A673 (cell line): ENCODE measurements at regions of chr11 and their contacts with region 1.

Region 1: GRCh38 chr11:59550368-59550841 is 39.1 kb downstream of the OR4D9 start:
- DNase-seq: peak; percentile 99
- H3K4me3 ChIP-seq: peak overlapping the region; percentile 60
- H3K27ac ChIP-seq: peak overlapping the region; percentile 91
- H3K4me1 ChIP-seq: peaks cover 15% of the 10 kb centered on the region
- H3K27me3 ChIP-seq: no peaks in the 10 kb centered on the region
- CTCF ChIP-seq: peak; percentile 59

Region 2: DNA sequence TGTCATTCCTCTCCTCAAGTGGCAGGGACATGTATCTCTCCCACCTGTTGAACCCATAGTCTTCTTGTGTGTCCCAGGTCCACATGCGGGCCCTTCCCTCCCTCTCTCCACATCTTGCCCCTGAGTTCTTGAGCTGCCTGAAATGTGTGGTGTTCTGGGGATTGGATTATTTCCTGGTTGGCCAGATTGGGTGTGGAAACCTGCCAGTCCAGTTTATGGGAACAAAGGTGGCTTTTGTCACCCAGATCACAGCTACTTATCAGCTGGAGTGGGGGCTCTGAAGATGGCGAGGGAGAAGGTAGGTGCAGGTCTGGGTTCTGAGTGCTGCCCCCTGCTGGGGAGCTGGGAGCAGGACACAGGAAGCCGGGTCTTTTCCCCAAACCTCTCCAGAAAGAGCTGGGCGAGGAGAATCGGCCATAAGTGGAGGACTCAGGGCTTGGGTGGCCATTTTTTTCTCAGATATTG is 364.2 kb before region 1 on chr11:
- CTCF ChIA-PET with region 1: interaction called, 19 read pairs
- POLR2A ChIA-PET with region 1: no interaction called
- intact Hi-C with region 1: loop called (anchors 10 kb)
- DNase-seq: peak; percentile 66
- H3K4me3 ChIP-seq: no peak overlapping the region
- H3K27ac ChIP-seq: no peak overlapping the region
- H3K4me1 ChIP-seq: no peaks in the 10 kb centered on the region
- H3K27me3 ChIP-seq: no peaks in the 10 kb centered on the region
- CTCF ChIP-seq: peak; percentile 91

Region 3: DNA sequence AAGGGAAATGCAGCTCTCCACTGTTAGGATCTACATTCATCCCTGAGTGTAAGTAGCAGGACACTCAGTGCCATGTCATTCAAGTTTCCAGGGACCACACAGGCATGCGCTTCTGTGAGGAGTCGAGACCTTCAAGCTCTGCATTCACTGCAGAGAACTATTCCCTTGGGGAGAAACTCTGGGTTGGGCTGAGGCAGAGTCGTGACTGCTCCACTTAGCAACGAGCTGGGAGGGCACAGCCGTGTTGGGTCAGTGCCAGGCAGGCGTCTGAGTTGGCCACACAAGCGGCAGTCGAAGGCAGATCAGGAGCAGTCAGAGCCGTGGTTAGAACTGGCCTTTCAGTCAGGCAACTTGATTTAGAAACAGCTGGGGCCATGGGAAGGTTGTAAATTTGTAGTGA is 352.4 kb before region 1 on chr11:
- CTCF ChIA-PET with region 1: no interaction called
- POLR2A ChIA-PET with region 1: no interaction called
- intact Hi-C with region 1: loop called (anchors 10 kb)
- DNase-seq: peak; percentile 89
- H3K4me3 ChIP-seq: no peak overlapping the region
- H3K27ac ChIP-seq: no peak overlapping the region
- H3K4me1 ChIP-seq: peaks cover 38% of the 10 kb centered on the region
- H3K27me3 ChIP-seq: no peaks in the 10 kb centered on the region
- CTCF ChIP-seq: no peak

Region 4: DNA sequence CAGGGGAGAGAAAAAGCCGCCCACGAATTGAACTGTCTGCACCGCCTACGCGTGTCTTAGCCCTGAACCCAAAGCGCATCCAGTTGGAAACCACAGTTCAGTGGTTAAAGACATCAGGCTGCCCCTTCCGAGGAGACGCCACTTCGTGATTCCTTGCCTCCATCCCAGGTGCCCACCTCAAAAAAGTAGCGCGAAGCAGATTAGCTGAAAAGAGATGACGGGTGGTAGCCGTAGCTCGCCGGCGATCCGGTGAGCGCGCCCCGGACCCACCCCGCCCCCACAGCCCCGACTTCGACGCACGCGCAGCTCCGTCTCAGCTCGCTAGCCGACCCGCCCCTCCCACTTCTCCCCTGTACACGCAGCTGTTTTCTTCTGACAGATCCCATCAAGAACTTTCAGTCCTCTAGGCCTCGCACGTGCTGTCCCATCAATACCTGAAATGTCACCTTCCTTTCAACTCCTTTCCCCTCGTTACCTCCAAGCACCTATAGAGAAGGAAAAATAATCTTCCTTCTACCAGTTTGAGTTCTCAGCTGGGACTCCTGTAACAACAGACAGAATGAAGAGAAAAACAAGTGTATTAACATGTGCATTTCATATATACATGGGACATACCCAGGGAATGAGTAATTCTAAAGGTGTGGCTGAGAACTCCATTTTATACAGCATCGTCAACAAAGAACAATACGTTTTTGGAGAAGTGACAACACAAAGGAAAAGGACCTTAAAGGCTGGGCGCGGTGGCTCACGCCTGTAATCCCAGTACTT is 10.5 kb after region 1 on chr11:
- CTCF ChIA-PET with region 1: no interaction called
- POLR2A ChIA-PET with region 1: interaction called, 4 read pairs
- intact Hi-C with region 1: loop called (anchors 1 kb)
- DNase-seq: peak; percentile 93
- H3K4me3 ChIP-seq: peak overlapping the region; percentile 90
- H3K27ac ChIP-seq: peak overlapping the region; percentile 80
- H3K4me1 ChIP-seq: peaks cover 6% of the 10 kb centered on the region
- H3K27me3 ChIP-seq: no peaks in the 10 kb centered on the region
- CTCF ChIP-seq: no peak

Region 5: DNA sequence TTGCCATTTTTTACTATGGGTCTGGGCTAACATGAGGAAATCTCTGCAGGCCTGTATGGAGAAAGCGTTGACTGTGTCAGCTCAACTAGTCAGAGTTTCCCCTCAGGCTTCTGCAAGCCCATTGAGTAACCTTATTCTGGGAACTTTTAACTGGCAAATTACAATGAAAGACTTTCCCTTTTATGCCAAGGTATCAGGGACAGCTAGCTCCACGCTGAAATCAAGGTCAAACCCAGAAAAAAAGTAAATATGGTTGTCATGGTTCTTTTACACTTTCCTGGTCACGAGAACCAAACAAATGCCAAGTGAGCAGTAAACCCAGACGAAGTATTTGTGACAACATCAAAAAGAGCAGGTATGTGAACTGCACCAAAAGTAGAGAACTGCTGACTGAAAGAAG is 51.4 kb after region 1 on chr11:
- CTCF ChIA-PET with region 1: no interaction called
- POLR2A ChIA-PET with region 1: no interaction called
- intact Hi-C with region 1: no loop called
- DNase-seq: no peak
- H3K4me3 ChIP-seq: no peak overlapping the region
- H3K27ac ChIP-seq: no peak overlapping the region
- H3K4me1 ChIP-seq: no peaks in the 10 kb centered on the region
- H3K27me3 ChIP-seq: no peaks in the 10 kb centered on the region
- CTCF ChIP-seq: no peak

Region 6: GRCh38 chr11:59615637-59616395 is 65.4 kb after region 1 on chr11 and contains the start of gene OSBP:
- CTCF ChIA-PET with region 1: no interaction called
- POLR2A ChIA-PET with region 1: no interaction called
- intact Hi-C with region 1: loop called (anchors 5 kb)
- DNase-seq: peak; percentile 100
- H3K4me3 ChIP-seq: peak within 1 kb of the TSS; percentile 68
- H3K27ac ChIP-seq: peak within 1 kb of the TSS; percentile 78
- H3K4me1 ChIP-seq: peaks cover 37% of the 10 kb centered on the region
- H3K27me3 ChIP-seq: no peaks in the 10 kb centered on the region
- CTCF ChIP-seq: no peak
- total RNA-seq, gene OSBP: 40.7 and 43.2 TPM in 2 replicates

Region 7: DNA sequence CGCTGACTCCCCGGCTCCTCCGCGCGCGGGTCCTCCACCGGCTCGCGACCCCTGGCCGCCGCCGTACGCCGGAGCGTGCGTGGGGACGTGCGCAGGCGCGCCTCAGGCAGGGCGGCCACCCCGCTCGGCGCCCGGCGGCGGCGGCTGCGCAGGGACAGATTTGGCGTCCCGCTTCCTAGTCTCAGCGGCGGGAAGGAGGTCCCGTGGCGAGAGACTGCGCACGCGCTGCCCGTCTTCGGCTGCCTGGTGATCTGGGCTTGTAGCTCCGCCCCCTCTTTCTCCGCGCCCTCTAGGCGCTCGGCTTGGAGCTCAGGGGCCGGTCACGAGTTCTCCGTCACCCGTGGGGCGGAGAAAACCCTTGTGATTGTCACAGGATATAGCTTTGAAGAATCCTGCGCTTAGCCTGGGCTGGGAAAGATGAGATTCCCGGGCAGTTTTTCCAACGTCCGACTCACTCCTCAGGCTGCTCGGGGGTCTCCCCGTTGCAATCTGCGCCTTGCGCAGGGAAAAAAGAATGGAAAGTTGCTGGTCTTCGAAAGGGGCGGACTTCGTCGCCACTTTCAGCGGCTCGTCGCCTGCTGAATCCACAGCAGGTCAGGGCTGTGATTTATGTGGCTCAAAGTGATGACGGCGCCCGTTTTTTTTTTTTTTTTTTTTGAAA is 118.7 kb after region 1 on chr11 and contains the start of gene PATL1:
- CTCF ChIA-PET with region 1: no interaction called
- POLR2A ChIA-PET with region 1: no interaction called
- intact Hi-C with region 1: loop called (anchors 2 kb)
- DNase-seq: peak; percentile 99
- H3K4me3 ChIP-seq: peak within 1 kb of the TSS; percentile 93
- H3K27ac ChIP-seq: peak within 1 kb of the TSS; percentile 89
- H3K4me1 ChIP-seq: peaks cover 22% of the 10 kb centered on the region
- H3K27me3 ChIP-seq: no peaks in the 10 kb centered on the region
- CTCF ChIP-seq: no peak
- total RNA-seq, gene PATL1: 65.2 and 78.9 TPM in 2 replicates